ENCODE measurements at regions of chr10 and their contacts with region 1.

Region 1: GRCh38 chr10:104353325-104354048 is at the start of gene CFAP58:
- DNase-seq: peak; percentile 92
- ATAC-seq: peak; percentile 82
- H3K4me3 Mint-ChIP-seq: peak within 1 kb of the TSS; percentile 16
- H3K27ac Mint-ChIP-seq: peak within 1 kb of the TSS; percentile 47
- H3K4me1 Mint-ChIP-seq: peaks cover 11% of the 10 kb centered on the region
- H3K27me3 Mint-ChIP-seq: peaks cover 2% of the 10 kb centered on the region
- CTCF ChIP-seq: peak; percentile 78
- total RNA-seq, gene CFAP58: 0.27 to 0.38 TPM

Region 2: DNA sequence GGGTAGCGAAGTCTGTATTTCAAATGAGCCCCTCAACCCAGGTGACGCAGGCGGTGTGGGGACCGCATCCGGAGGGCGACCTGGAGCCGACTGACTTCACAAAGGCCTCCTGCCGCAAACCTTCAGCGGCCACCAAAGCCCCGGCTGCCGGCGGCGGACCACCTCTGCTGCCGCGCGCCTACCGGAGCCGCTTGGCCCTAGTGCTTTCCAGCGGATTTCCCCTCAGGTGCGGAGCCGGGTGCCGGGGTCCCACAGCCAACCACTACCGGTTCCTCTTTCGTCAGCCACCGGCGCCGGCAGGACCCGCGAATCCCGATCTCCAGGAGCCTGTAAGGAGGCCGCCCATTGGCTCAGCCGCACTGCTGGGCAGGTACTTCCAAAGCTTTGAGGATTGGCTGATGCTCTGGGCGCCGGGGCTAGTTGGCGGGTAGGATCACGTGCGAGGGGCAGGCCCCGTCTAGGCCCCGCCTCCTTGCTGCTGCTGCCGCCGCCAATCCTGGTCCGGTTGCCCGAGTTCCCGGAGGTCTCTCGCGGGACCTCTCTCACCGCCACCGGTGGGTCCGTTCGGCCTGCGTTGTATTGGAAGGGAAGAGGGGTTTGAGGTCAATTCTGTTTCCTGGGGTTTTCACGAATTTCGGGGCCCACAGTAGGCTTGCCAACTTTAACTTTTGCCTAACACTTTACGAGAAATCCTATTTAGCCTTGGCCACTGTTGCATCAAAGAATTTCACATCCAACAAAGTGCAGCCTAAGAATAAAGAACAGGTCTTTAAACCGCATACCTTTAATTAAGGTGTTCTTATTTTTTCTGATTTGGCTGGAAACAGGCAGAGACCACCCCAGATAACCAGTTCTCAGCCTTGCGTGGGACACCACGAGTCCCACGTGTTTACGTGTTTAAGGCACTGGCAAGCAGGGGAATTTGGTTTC is 84.5 kb before region 1 on chr10 and contains the start of gene GSTO2:
- CTCF ChIA-PET with region 1: interaction called, 149 read pairs
- POLR2A ChIA-PET with region 1: interaction called, 3 read pairs
- intact Hi-C with region 1: no loop called
- DNase-seq: peak; percentile 100
- ATAC-seq: peak; percentile 91
- H3K4me3 Mint-ChIP-seq: peak within 1 kb of the TSS; percentile 93
- H3K27ac Mint-ChIP-seq: peak within 1 kb of the TSS; percentile 98
- H3K4me1 Mint-ChIP-seq: peaks cover 40% of the 10 kb centered on the region
- H3K27me3 Mint-ChIP-seq: no peaks in the 10 kb centered on the region
- CTCF ChIP-seq: no peak
- total RNA-seq, gene GSTO2: 1.8 to 2.7 TPM

Region 3: GRCh38 chr10:104300736-104301292 is 52.7 kb before region 1 on chr10:
- CTCF ChIA-PET with region 1: interaction called, 234 read pairs
- POLR2A ChIA-PET with region 1: interaction called, 5 read pairs
- intact Hi-C with region 1: loop called (anchors 1 kb)
- DNase-seq: peak; percentile 48
- ATAC-seq: peak; percentile 50
- H3K4me3 Mint-ChIP-seq: no peak overlapping the region
- H3K27ac Mint-ChIP-seq: peak overlapping the region; percentile 56
- H3K4me1 Mint-ChIP-seq: peaks cover 37% of the 10 kb centered on the region
- H3K27me3 Mint-ChIP-seq: peaks cover under 1% of the 10 kb centered on the region
- CTCF ChIP-seq: no peak

Region 4: DNA sequence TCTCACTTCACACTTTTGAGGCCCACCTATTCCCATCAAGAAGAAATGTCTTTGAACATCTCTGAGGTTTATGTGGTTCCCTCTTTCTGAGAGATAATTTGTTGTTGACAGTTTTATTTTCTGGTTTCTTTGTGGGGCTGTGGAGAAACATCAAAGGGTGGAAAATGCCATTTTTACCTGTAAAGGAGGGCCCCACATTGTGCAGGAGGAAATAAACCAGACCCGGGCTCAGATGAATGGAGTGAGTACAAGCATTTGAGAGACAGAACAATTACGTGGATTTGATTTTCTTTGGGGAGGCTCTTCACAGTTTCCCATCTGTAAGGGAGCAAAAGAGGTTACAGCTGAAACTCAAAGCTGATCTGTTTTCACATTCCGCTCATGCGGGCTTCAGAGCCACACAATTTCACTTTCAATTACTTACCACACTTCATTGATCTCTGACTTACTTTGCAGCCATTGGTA is 45.0 kb before region 1 on chr10:
- CTCF ChIA-PET with region 1: interaction called, 191 read pairs
- POLR2A ChIA-PET with region 1: interaction called, 6 read pairs
- intact Hi-C with region 1: loop called (anchors 1 kb)
- DNase-seq: peak; percentile 59
- ATAC-seq: peak; percentile 73
- H3K4me3 Mint-ChIP-seq: peak overlapping the region; percentile 1
- H3K27ac Mint-ChIP-seq: peak overlapping the region; percentile 74
- H3K4me1 Mint-ChIP-seq: peaks cover 60% of the 10 kb centered on the region
- H3K27me3 Mint-ChIP-seq: peaks cover 5% of the 10 kb centered on the region
- CTCF ChIP-seq: no peak

Region 5: GRCh38 chr10:104328896-104329710 is 24.4 kb before region 1 on chr10:
- CTCF ChIA-PET with region 1: interaction called, 24 read pairs
- POLR2A ChIA-PET with region 1: interaction called, 5 read pairs
- intact Hi-C with region 1: no loop called
- DNase-seq: peak; percentile 94
- ATAC-seq: peak; percentile 86
- H3K4me3 Mint-ChIP-seq: peak overlapping the region; percentile 73
- H3K27ac Mint-ChIP-seq: peak overlapping the region; percentile 98
- H3K4me1 Mint-ChIP-seq: peaks cover 96% of the 10 kb centered on the region
- H3K27me3 Mint-ChIP-seq: no peaks in the 10 kb centered on the region
- CTCF ChIP-seq: no peak

Region 6: GRCh38 chr10:104337974-104338735 is 15.3 kb before region 1 on chr10 and contains the start of gene ITPRIP:
- CTCF ChIA-PET with region 1: interaction called, 28 read pairs
- POLR2A ChIA-PET with region 1: interaction called, 14 read pairs
- intact Hi-C with region 1: no loop called
- DNase-seq: peak; percentile 84
- ATAC-seq: peak; percentile 76
- H3K4me3 Mint-ChIP-seq: peak within 1 kb of the TSS; percentile 86
- H3K27ac Mint-ChIP-seq: peak within 1 kb of the TSS; percentile 100
- H3K4me1 Mint-ChIP-seq: peaks cover 45% of the 10 kb centered on the region
- H3K27me3 Mint-ChIP-seq: no peaks in the 10 kb centered on the region
- CTCF ChIP-seq: no peak
- total RNA-seq, gene ITPRIP: 18.3 to 18.9 TPM